ENCODE measurements at regions of chr1 and their contacts with region 1.

Region 1: GRCh38 chr1:63442141-63442475 is 74.7 kb downstream of the ALG6 start:
- DNase-seq: no peak
- ATAC-seq: no peak
- H3K4me3 ChIP-seq: no peak overlapping the region
- H3K27ac ChIP-seq: no peak overlapping the region
- H3K4me1 ChIP-seq: no peaks in the 10 kb centered on the region
- H3K27me3 ChIP-seq: no peaks in the 10 kb centered on the region
- CTCF ChIP-seq: no peak
- POLR2A ChIP-seq: no peak

Region 2: DNA sequence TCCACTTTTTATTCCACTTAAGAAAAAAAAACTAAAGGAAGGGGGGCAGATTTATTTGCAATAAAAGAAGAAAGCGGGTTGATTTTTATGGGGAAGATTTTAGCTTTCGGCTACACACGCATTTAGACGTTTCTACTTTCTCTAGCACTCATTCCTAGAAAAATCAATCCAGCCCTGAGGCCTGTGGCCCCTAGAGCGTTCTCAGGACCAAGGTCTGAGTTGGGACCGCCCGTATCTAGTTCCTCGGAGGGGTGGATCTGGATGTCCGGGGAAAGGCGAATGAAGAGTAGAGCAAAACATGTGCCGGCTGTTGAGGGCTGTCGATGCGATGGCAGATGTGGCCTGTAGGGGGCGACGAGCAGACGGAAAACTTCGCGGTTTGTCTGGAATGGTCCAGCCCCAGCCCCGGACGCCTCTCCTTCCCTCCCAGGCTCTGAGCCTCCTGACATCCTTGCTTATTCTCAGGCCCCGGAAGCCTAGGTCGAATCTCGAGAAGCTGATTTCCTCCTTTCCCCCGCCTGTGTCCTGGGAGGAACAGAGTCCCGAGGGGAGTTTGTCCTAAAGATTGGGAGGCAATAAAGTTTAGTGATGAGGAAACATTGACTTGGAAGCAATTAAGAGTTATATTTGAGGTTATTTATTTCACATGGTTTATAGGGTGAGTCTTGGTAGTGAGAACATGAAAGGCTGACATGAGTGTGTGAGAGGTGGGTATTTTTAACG is 114.5 kb before region 1 on chr1:
- intact Hi-C with region 1: loop called in 1 of 10 experiments (anchors 5 kb)
- DNase-seq: peak in 3 of 5 donors; percentile 36 to 75 (median 47)
- ATAC-seq: peak in 3 of 4 donors; percentile 52 to 60 (median 58)
- H3K4me3 ChIP-seq: no peak overlapping the region
- H3K27ac ChIP-seq: no peak overlapping the region
- H3K4me1 ChIP-seq: peaks cover 0 to 35% (median 5%) of the 10 kb centered on the region in 12 donors
- H3K27me3 ChIP-seq: peaks cover 70 to 100% (median 97%) of the 10 kb centered on the region in 9 donors
- CTCF ChIP-seq: peak; percentile 42 to 70 (median 56)
- POLR2A ChIP-seq: no peak

Measured in heart left ventricle (tissue), 16 donors.